Activated CD8-positive, alpha-beta T cell treated with anti-CD3 and anti-CD28 coated beads for 36 hours (primary cell): ENCODE measurements at regions of chrX and their contacts with region 1.

Region 1: DNA sequence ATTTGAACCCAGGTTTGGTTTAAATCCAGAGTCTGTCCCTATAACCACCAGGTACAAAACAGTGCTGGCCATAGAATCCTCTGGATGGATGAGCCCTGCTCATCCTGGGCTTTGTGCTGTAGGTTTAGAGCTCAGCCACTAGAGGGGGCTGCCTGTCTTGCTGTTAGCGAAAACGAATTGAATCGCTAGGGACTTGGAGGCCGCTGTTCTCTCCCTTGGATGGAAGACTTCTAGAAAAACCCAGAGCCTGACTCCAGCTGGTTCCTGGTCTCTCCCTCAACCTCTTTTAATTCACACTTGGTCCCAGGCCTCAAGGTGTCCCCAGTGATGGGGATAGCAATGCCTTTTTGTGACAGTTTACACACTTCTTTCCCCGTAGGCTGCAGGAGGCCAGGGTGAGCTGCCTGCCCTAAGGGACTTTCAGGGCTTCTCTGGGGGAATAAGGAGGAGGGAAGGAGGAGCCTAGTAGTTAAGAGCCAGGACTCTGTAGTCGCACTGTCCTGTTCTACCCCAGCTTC is 8.7 kb downstream of the RIPPLY1 start:
- DNase-seq: peak; percentile 44
- ATAC-seq: peak; percentile 78
- H3K4me3 Mint-ChIP-seq: no peak overlapping the region
- H3K27ac Mint-ChIP-seq: no peak overlapping the region
- H3K4me1 Mint-ChIP-seq: no peaks in the 10 kb centered on the region
- H3K27me3 Mint-ChIP-seq: peaks cover 3% of the 10 kb centered on the region
- CTCF ChIP-seq: peak; percentile 59

Region 2: DNA sequence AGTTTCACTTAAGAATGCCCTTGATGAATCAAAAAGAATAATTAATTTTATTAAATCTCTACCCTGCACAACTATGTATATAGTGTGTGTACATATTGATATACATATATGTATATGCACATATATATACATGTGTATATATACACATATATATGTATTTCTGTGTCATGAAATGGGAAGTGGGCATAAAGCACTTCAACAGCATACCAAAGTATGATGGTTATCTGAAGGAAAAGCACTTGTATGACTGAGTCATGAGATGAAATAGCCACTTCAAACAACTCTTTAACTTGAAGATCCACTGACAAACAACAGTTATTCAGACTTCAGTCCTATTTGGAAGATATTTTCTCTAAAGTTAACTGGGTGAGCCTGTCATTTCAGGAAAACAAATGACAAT is 151.6 kb before region 1 on chrX:
- CTCF ChIA-PET with region 1: no interaction called
- POLR2A ChIA-PET with region 1: no interaction called
- intact Hi-C with region 1: no loop called
- DNase-seq: no peak
- ATAC-seq: no peak
- H3K4me3 Mint-ChIP-seq: no peak overlapping the region
- H3K27ac Mint-ChIP-seq: no peak overlapping the region
- H3K4me1 Mint-ChIP-seq: no peaks in the 10 kb centered on the region
- H3K27me3 Mint-ChIP-seq: no peaks in the 10 kb centered on the region
- CTCF ChIP-seq: no peak

Region 3: DNA sequence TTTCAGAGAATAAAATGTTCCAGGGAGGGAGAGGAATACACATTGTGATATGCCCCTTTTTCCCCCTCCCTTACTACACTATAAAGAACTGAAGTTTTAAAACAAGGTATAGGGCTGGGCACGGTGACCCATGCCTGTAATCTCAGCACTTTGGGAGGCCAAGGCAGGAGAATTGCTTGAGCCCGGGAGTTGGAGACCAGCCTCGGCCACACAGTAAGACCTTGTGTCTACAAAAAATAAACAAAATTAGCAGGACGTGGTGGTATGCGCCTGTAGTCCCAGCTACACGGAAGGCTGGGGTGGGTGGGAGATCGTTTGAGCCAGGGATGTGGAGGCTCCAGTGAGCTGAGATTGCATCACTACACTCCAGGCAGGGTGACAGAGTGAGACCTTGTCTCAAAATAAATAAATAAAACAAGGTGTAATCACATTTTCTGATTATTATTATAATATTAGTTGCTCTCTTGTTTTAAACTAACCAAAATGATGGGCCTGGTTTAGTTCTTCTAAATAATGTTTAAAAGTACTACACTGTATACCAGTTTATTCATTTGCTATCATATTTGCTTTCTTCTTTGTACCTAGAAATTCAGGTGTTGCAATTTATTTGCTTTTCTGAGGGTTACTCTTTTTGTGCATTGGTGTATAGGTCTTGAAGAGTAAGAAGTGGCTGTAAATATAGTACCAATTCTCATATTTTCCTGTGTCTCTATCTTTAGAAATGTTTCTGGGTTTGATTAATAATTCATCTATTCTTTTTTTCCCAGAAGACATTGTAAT is 83.1 kb before region 1 on chrX:
- CTCF ChIA-PET with region 1: no interaction called
- POLR2A ChIA-PET with region 1: no interaction called
- intact Hi-C with region 1: no loop called
- DNase-seq: no peak
- ATAC-seq: no peak
- H3K4me3 Mint-ChIP-seq: no peak overlapping the region
- H3K27ac Mint-ChIP-seq: no peak overlapping the region
- H3K4me1 Mint-ChIP-seq: no peaks in the 10 kb centered on the region
- H3K27me3 Mint-ChIP-seq: peaks cover 4% of the 10 kb centered on the region
- CTCF ChIP-seq: no peak

Region 4: DNA sequence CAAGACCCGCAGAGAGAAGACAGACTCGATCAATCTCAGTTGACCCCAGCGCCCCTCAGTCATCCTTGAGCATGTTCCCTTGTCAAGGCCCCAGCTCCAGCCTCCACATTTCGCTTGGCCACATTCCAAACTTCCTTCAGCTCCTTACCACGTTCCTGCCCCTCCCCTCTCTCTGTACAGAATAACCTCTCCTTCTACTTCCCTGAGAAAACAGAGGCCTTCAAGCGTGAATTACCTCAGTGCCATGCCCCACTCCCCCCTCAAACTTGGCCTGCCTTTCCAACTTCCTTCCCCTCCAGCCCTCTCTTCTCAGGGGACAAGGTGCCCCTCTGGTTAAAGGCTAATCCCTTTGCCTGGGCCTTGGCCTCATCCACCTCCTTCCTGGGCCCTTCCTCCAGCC is 11.9 kb after region 1 on chrX:
- CTCF ChIA-PET with region 1: interaction called, 22 read pairs
- POLR2A ChIA-PET with region 1: no interaction called
- intact Hi-C with region 1: no loop called
- DNase-seq: no peak
- ATAC-seq: no peak
- H3K4me3 Mint-ChIP-seq: no peak overlapping the region
- H3K27ac Mint-ChIP-seq: no peak overlapping the region
- H3K4me1 Mint-ChIP-seq: no peaks in the 10 kb centered on the region
- H3K27me3 Mint-ChIP-seq: no peaks in the 10 kb centered on the region
- CTCF ChIP-seq: no peak

Region 5: DNA sequence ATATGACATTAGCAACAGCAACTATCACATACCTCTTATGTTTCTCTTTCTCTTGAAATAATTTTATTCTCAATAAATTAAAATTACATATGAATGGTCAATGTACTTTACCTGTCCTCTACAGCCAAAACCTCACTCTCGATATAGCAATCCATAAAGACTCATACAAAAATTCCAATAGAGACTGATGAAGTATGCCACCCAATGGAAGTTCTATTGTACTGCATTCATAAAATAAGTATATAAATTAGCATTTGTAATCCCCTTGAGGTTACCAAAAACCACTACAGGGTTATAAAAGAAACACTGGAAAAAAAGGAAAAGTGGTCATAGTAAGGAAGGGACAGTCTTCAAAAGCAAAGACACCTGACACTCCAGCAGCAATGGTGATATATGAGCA is 58.5 kb after region 1 on chrX:
- CTCF ChIA-PET with region 1: interaction called, 6 read pairs
- POLR2A ChIA-PET with region 1: no interaction called
- intact Hi-C with region 1: loop called (anchors 5 kb)
- DNase-seq: no peak
- ATAC-seq: no peak
- H3K4me3 Mint-ChIP-seq: no peak overlapping the region
- H3K27ac Mint-ChIP-seq: no peak overlapping the region
- H3K4me1 Mint-ChIP-seq: no peaks in the 10 kb centered on the region
- H3K27me3 Mint-ChIP-seq: no peaks in the 10 kb centered on the region
- CTCF ChIP-seq: peak; percentile 32

Region 6: GRCh38 chrX:107006336-107006735 is 111.9 kb after region 1 on chrX:
- CTCF ChIA-PET with region 1: no interaction called
- POLR2A ChIA-PET with region 1: no interaction called
- intact Hi-C with region 1: no loop called
- DNase-seq: no peak
- ATAC-seq: no peak
- H3K4me3 Mint-ChIP-seq: no peak overlapping the region
- H3K27ac Mint-ChIP-seq: no peak overlapping the region
- H3K4me1 Mint-ChIP-seq: no peaks in the 10 kb centered on the region
- H3K27me3 Mint-ChIP-seq: no peaks in the 10 kb centered on the region
- CTCF ChIP-seq: no peak

Region 7: DNA sequence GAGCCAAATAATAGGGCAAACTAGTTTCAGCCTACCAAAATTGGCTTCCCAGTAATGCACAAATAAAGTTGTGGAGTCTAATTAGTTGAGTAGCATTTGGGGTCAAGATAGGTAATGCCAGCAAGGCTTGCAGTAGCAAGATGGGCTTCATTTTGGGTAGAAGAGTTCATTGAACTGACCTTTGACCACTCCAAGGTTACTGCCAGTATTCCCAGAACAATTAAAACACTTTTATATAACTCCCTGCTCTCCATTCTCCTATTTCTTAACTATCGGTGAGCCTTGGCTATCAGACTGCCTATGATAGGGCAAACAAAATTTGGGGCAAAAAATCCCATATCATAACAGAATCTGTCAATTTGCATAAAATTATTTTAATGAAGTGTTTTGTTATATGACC is 319.0 kb after region 1 on chrX:
- CTCF ChIA-PET with region 1: no interaction called
- POLR2A ChIA-PET with region 1: no interaction called
- intact Hi-C with region 1: no loop called
- DNase-seq: no peak
- ATAC-seq: no peak
- H3K4me3 Mint-ChIP-seq: no peak overlapping the region
- H3K27ac Mint-ChIP-seq: no peak overlapping the region
- H3K4me1 Mint-ChIP-seq: no peaks in the 10 kb centered on the region
- H3K27me3 Mint-ChIP-seq: no peaks in the 10 kb centered on the region
- CTCF ChIP-seq: no peak

Region 8: GRCh38 chrX:107429090-107429489 is 534.6 kb after region 1 on chrX:
- CTCF ChIA-PET with region 1: interaction called, 4 read pairs
- POLR2A ChIA-PET with region 1: no interaction called
- intact Hi-C with region 1: loop called (anchors 10 kb)
- DNase-seq: no peak
- ATAC-seq: no peak
- H3K4me3 Mint-ChIP-seq: no peak overlapping the region
- H3K27ac Mint-ChIP-seq: no peak overlapping the region
- H3K4me1 Mint-ChIP-seq: no peaks in the 10 kb centered on the region
- H3K27me3 Mint-ChIP-seq: no peaks in the 10 kb centered on the region
- CTCF ChIP-seq: peak; percentile 35